ENCODE measurements at regions of chr13 and their contacts with region 1.

Region 1: GRCh38 chr13:46126552-46127357 is 21.9 kb upstream of the CPB2 start:
- DNase-seq: peak; percentile 34 to 60 (median 59)
- H3K4me3 ChIP-seq: no peak overlapping the region
- H3K4me3 Mint-ChIP-seq: no peak overlapping the region
- H3K27ac ChIP-seq: peak overlapping the region in 1 of 2 donors; percentile 62
- H3K27ac Mint-ChIP-seq: peak overlapping the region; percentile 32 to 84 (median 73)
- H3K4me1 ChIP-seq: peaks cover 21 to 27% of the 10 kb centered on the region in 2 donors
- H3K4me1 Mint-ChIP-seq: peaks cover 35% of the 10 kb centered on the region
- H3K27me3 ChIP-seq: no peaks in the 10 kb centered on the region
- H3K27me3 Mint-ChIP-seq: no peaks in the 10 kb centered on the region
- CTCF ChIP-seq: peak; percentile 87

Region 2: DNA sequence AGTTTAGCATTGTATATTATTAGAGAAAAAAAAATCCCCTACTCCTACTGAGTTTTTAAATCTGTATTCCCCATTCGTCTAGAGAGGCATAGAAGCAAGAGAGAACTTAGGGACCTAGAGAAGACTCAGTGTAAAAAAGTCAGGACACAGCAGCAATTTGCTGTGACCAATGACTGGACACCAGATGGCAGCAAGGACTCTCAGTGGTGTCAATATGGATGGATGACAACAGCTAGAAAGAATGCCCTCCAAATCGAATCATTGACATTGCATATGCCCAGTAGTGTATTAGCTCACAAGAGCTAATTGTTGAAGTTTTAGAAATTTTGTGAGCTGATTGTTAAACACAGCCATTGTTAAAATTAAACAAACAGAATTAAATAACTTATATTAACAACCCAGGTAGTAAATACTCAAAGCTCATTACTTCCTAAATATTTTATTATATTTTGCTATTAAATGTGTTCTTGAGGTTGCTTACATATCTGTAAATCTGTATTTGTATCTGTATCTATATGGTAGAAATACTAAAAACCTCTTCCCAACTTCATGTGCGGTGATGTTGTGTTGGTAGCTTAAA is 319.1 kb before region 1 on chr13:
- intact Hi-C with region 1: loop called in 1 of 2 experiments (anchors 10 kb)
- DNase-seq: peak; percentile 18 to 47 (median 21)
- H3K4me3 ChIP-seq: no peak overlapping the region
- H3K4me3 Mint-ChIP-seq: no peak overlapping the region
- H3K27ac ChIP-seq: no peak overlapping the region
- H3K27ac Mint-ChIP-seq: no peak overlapping the region
- H3K4me1 ChIP-seq: no peaks in the 10 kb centered on the region
- H3K4me1 Mint-ChIP-seq: peaks cover 3% of the 10 kb centered on the region
- H3K27me3 ChIP-seq: no peaks in the 10 kb centered on the region
- H3K27me3 Mint-ChIP-seq: no peaks in the 10 kb centered on the region
- CTCF ChIP-seq: peak; percentile 70

Region 3: GRCh38 chr13:46052319-46053161 is 74.2 kb before region 1 on chr13 and contains the start of gene ZC3H13:
- intact Hi-C with region 1: loop called (anchors 5 to 10 kb)
- DNase-seq: peak; percentile 93 to 94 (median 94)
- H3K4me3 ChIP-seq: peak within 1 kb of the TSS; percentile 60 to 82 (median 82)
- H3K4me3 Mint-ChIP-seq: peak within 1 kb of the TSS; percentile 90 to 94
- H3K27ac ChIP-seq: peak within 1 kb of the TSS; percentile 96 to 98
- H3K27ac Mint-ChIP-seq: peak within 1 kb of the TSS; percentile 98 to 99 (median 99)
- H3K4me1 ChIP-seq: peaks cover 21 to 28% of the 10 kb centered on the region in 2 donors
- H3K4me1 Mint-ChIP-seq: peaks cover 29% of the 10 kb centered on the region
- H3K27me3 ChIP-seq: peaks cover 6 to 10% of the 10 kb centered on the region in 2 donors
- H3K27me3 Mint-ChIP-seq: peaks cover 3 to 8% (median 5%) of the 10 kb centered on the region in 3 donors
- CTCF ChIP-seq: peak; percentile 43
- polyA plus RNA-seq, gene ZC3H13: 5.3 to 22.2 (median 9.7) TPM

Measured in CD14-positive monocyte (primary cell).